HEK293T (cell line): ENCODE measurements at regions of chr17 and their contacts with region 1.

Region 1: DNA sequence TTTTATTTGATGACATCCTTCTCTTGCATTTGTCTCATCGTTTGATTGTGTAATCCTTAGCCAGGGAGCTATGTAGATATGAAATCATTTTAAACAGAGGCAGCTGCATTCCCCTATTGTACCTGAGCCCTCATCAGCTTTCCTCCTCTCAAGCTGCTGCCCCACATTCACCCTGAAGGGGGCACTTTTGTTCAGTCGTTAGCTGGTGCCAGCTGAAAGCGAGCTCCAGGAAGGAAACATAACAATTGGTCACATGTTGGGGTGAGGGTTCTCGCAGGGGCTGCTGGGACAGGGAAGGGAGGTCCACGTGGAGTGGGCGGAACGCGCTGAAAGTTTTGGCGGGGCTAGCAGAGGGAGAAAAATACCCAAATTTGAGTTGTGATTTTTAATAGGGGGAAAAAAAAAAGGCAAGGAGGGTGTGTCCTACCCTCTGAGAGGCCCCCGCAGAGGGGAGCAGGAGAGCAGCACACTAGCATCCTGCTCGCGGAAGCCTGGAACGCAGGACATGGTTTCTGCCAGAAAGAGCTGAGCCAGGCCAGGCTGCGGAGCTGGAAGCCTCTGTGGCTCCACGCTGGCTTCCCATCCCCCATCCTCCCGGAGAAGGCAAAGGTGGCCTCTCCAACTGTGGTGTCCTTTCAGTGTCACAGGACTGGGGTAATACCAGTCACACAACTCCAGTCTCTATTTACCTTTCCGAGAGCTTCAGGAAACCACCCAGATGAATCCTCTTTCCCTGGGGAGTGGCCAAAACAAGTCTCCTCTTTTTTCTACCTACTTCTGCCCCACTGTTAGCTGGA is 8.5 kb upstream of the MSL1 start:
- DNase-seq: peak; percentile 77

Region 2: GRCh38 chr17:40056379-40057010 is 56.8 kb before region 1 on chr17:
- CTCF ChIA-PET with region 1: interaction called, 8 read pairs
- POLR2A ChIA-PET with region 1: interaction called, 21 read pairs
- DNase-seq: no peak

Region 3: GRCh38 chr17:40098846-40099618 is 14.3 kb before region 1 on chr17:
- CTCF ChIA-PET with region 1: interaction called, 14 read pairs
- POLR2A ChIA-PET with region 1: interaction called, 95 read pairs
- DNase-seq: peak; percentile 80

Region 4: GRCh38 chr17:40139566-40140058 is 26.3 kb after region 1 on chr17:
- CTCF ChIA-PET with region 1: interaction called, 8 read pairs
- POLR2A ChIA-PET with region 1: interaction called, 117 read pairs
- DNase-seq: no peak

Region 5: GRCh38 chr17:40219073-40219860 is 106.0 kb after region 1 on chr17 and contains the start of gene WIPF2:
- CTCF ChIA-PET with region 1: interaction called, 5 read pairs
- POLR2A ChIA-PET with region 1: interaction called, 10 read pairs
- DNase-seq: peak; percentile 88

Region 6: GRCh38 chr17:40317880-40318829 is 204.8 kb after region 1 on chr17:
- CTCF ChIA-PET with region 1: no interaction called
- POLR2A ChIA-PET with region 1: no interaction called
- DNase-seq: peak; percentile 93

Region 7: DNA sequence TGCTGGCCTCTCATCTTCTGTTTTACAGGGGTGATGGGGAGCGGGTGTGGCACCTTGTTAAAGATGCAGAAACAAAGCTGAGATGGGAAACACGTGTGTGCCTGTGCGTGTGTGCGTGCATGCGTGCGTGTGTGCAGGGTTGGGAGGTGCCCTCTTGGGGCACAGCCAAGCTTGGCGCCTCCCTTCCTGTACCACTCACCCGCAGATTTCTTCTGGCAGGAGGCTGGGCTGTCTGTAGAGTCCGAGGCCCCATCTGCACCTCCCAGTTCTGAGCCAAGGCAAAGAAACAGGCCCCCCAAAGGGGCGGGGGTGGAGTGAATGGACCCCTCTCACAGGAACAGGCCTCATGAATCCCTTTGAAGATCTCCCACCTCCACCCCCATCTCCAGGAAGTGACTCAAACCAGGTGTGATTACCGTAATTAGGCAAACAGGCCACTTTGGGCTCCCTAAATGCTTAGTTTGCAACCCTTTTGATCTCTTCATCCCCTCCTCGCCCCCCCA is 367.2 kb after region 1 on chr17:
- CTCF ChIA-PET with region 1: no interaction called
- POLR2A ChIA-PET with region 1: no interaction called
- DNase-seq: no peak